ENCODE measurements at regions of chr14 and their contacts with region 1.

Region 1: DNA sequence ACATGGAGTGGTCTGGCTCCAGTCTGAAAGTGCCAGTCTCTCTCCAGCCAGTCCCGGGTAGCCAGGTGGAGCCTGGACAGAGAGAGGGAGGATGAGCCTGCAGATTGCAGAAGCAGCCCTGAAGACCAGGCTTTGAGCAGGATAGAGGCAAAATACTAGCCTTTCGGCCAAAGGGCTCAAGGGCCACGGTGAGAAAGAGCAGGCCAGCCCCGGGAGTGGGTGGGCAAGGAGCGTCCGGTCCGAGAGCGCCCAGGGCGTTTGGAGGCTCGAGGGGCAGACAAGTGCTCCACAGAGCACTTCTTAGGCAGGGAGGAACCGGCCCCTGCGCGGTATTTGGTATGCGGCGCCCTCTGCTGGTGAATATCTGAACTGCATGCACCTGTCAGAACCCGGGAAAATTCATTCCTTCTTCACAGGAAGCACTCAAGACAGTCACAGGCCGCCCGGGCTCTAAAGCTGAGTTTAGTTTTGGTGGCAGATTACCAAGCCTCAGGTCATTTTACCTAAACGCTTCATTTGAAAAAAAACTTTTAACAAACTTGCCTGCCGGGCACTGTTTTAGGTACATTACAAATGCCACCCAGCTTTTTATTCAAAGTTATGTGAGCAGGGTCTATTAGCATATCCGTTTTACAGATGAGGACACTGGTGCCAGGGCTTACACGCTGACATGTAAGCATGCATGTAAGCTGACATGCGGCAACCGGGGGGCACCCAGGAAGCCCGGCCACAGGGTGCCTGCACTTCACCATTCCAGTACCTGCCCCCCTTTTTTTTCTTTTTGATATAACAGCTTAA is 21.0 kb upstream of the PSMC1 start:
- DNase-seq: peak; percentile 23 to 73 (median 52)
- ATAC-seq: peak; percentile 63
- H3K4me3 ChIP-seq: no peak overlapping the region
- H3K4me3 Mint-ChIP-seq: no peak overlapping the region
- H3K27ac ChIP-seq: no peak overlapping the region
- H3K27ac Mint-ChIP-seq: no peak overlapping the region
- H3K4me1 ChIP-seq: peaks cover 6% of the 10 kb centered on the region
- H3K4me1 Mint-ChIP-seq: no peaks in the 10 kb centered on the region
- H3K27me3 ChIP-seq: peaks cover 9 to 17% of the 10 kb centered on the region in 2 experiments
- H3K27me3 Mint-ChIP-seq: peaks cover 35% of the 10 kb centered on the region
- CTCF ChIP-seq: peak; percentile 71

Region 2: DNA sequence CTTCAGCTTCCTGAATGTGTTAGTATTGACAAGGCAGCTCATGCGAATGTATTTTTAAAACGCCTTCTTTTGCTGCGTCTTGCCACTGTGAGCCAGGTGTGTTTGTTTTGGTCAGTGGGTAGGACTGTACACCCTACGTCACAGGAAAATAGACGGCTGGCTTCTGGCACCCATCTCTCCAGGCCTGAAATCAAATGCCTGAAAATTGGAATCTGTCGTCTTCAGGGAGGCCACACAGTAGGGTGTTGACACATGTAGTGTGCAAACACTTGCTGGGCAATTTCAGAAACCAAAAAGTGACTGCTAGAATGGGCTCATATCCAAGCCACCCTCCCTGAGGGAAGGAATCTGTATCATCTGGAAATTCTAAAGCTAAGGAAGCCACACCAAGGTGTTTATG is 1201.6 kb before region 1 on chr14:
- CTCF ChIA-PET with region 1: no interaction called
- POLR2A ChIA-PET with region 1: no interaction called
- intact Hi-C with region 1: loop called in 1 of 2 experiments (anchors 10 kb)
- DNase-seq: no peak
- ATAC-seq: no peak
- H3K4me3 ChIP-seq: no peak overlapping the region
- H3K4me3 Mint-ChIP-seq: no peak overlapping the region
- H3K27ac ChIP-seq: no peak overlapping the region
- H3K27ac Mint-ChIP-seq: no peak overlapping the region
- H3K4me1 ChIP-seq: no peaks in the 10 kb centered on the region
- H3K4me1 Mint-ChIP-seq: no peaks in the 10 kb centered on the region
- H3K27me3 ChIP-seq: peaks cover 3 to 10% of the 10 kb centered on the region in 2 experiments
- H3K27me3 Mint-ChIP-seq: peaks cover 68% of the 10 kb centered on the region
- CTCF ChIP-seq: no peak

Region 3: GRCh38 chr14:89936658-89937185 is 298.7 kb before region 1 on chr14:
- CTCF ChIA-PET with region 1: interaction called, 16 read pairs
- POLR2A ChIA-PET with region 1: no interaction called
- intact Hi-C with region 1: loop called in 1 of 2 experiments (anchors 1 kb)
- DNase-seq: no peak
- ATAC-seq: no peak
- H3K4me3 ChIP-seq: no peak overlapping the region
- H3K4me3 Mint-ChIP-seq: no peak overlapping the region
- H3K27ac ChIP-seq: no peak overlapping the region
- H3K27ac Mint-ChIP-seq: no peak overlapping the region
- H3K4me1 ChIP-seq: no peaks in the 10 kb centered on the region
- H3K4me1 Mint-ChIP-seq: no peaks in the 10 kb centered on the region
- H3K27me3 ChIP-seq: no peaks in the 10 kb centered on the region
- H3K27me3 Mint-ChIP-seq: no peaks in the 10 kb centered on the region
- CTCF ChIP-seq: no peak